ENCODE measurements at regions of chr5 and their contacts with region 1.

Region 1: DNA sequence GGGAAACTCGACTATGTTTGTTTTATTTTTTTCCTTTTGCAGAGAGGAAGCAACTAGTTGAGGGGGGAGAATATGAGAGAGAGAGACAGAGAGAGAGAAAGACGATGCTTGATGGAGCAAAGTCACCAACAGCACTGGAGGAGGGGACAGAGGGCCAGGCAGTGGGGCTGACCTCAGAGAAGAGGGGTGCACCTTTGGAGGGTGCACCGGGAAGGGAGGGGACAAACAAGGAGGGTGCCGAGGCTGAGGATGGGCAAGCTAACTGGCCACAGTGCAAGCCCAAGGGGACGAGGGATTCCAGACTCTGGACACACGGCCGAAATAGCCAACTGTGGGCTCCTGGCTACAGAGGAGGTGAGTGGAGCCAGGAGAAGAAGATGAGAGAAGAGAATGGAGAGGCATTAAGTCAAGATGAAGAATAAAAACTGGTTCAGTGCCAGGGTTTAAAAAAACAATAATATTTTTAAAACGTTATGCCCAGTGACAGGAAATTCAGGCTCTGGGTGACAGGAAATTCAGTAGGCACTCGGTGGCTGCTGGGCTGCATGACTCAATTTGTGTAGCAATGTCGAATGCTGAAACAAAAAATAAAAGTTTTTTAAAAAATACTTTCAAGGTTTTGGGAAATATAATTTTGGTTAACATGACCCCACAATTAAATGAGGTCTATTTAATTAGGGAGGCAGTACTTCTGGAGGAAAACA is 13.3 kb upstream of the GLRX start:
- DNase-seq: peak; percentile 28 to 70 (median 33)
- H3K4me3 ChIP-seq: peak overlapping the region; percentile 43 to 78
- H3K4me3 Mint-ChIP-seq: peak overlapping the region; percentile 82 to 98 (median 89)
- H3K27ac ChIP-seq: peak overlapping the region; percentile 77
- H3K27ac Mint-ChIP-seq: peak overlapping the region; percentile 87 to 97 (median 93)
- H3K4me1 ChIP-seq: peaks cover 39% of the 10 kb centered on the region
- H3K4me1 Mint-ChIP-seq: peaks cover 24 to 68% (median 49%) of the 10 kb centered on the region in 4 donors
- H3K27me3 ChIP-seq: no peaks in the 10 kb centered on the region
- H3K27me3 Mint-ChIP-seq: no peaks in the 10 kb centered on the region

Region 2: DNA sequence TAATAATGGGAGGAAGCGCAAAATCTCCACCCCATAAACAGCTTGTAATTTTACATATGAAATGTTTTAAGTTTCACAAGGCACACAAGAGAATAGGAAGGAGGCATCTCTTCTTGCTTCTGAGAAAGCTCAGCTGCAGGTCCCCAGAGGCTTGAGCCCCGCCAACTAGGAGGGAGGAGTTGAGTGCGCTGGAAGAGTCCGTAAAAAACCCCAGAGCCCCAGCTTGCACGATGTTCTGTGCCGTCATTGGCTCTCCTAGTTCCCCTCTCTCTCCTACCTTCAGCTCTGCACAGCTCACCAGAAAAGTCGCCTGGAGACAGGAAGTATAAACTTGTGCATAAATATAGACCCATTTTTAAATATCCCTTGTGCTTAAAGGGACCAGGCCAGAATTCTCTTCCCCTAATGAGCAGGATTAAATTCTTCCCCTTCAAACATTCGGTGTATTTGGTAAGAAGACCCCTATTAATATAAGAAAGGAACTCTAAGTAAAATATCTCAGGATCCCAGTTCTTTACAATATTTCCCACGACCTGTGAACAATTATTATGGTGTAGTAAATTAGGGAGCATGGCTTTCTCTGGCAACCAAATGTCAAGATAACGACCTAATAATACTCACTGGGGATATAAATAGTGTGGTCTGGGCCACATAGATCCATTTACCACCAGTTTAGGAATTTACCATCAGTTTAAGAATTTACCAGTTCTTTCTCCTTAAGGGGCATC is 27.0 kb before region 1 on chr5:
- CTCF ChIA-PET with region 1: interaction called, 40 read pairs
- POLR2A ChIA-PET with region 1: interaction called, 92 read pairs
- intact Hi-C with region 1: loop called (anchors 1 kb)
- DNase-seq: peak; percentile 77 to 94 (median 88)
- H3K4me3 ChIP-seq: no peak overlapping the region
- H3K4me3 Mint-ChIP-seq: peak overlapping the region; percentile 57 to 87 (median 72)
- H3K27ac ChIP-seq: peak overlapping the region; percentile 67
- H3K27ac Mint-ChIP-seq: peak overlapping the region; percentile 66 to 95 (median 91)
- H3K4me1 ChIP-seq: peaks cover 59% of the 10 kb centered on the region
- H3K4me1 Mint-ChIP-seq: peaks cover 46 to 66% (median 56%) of the 10 kb centered on the region in 4 donors
- H3K27me3 ChIP-seq: no peaks in the 10 kb centered on the region
- H3K27me3 Mint-ChIP-seq: no peaks in the 10 kb centered on the region

Region 3: DNA sequence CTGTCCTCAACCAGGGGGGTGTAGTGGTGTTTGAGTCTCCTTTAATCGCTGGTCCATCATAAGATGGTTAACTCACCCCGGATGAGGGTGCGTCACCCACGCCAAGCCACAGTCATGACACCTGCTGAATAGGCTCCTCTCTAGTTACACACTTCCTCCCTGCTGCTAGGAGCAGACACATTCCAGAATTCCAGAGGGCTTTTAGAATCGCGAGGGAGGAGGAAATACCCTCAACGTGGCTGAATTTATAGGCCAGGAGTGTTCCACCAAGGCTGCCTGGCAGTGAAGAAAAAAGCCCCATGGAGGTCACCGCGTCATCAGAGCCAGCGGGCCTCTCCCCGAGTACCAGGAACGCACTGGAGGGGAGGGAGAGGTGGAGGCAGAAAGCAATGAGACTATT is 18.4 kb before region 1 on chr5:
- CTCF ChIA-PET with region 1: interaction called, 68 read pairs
- POLR2A ChIA-PET with region 1: interaction called, 273 read pairs
- intact Hi-C with region 1: loop called (anchors 1 kb)
- DNase-seq: peak in 2 of 5 donors; percentile 35 to 77
- H3K4me3 ChIP-seq: peak overlapping the region; percentile 21 to 44
- H3K4me3 Mint-ChIP-seq: peak overlapping the region; percentile 79 to 100 (median 98)
- H3K27ac ChIP-seq: peak overlapping the region; percentile 66
- H3K27ac Mint-ChIP-seq: peak overlapping the region; percentile 76 to 96 (median 92)
- H3K4me1 ChIP-seq: peaks cover 82% of the 10 kb centered on the region
- H3K4me1 Mint-ChIP-seq: peaks cover 64 to 95% (median 68%) of the 10 kb centered on the region in 4 donors
- H3K27me3 ChIP-seq: no peaks in the 10 kb centered on the region
- H3K27me3 Mint-ChIP-seq: no peaks in the 10 kb centered on the region

Region 4: DNA sequence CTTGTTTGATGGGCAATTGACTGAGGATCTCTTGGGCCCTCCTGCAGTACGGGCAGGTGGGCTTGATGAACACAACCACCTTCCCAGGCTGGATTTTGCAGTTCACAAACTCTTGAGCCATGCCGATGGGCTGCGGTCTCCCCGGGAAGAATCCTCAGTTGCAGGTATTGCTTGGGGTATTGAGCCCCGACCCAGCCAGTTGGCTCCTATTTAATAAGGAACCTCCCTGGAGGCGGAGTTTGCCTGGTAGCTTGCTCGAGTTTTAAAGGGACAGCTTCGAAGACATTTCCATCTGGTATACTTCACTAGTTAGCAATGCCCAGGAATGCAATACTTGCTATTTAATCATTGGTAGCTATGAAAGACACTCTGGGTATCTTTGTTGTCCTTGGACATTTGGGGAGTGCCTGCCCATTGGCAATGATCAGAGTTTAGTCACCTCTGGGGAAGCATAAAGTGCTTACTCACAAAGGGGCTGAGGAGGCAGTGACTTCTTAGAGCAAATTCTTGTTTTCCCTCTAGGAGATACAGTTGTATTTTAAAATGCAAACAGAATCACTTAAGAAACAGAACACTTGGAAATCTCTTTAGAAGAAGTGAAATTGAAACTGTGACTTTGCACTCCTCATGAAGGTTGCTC is 13.2 kb before region 1 on chr5 and contains the start of gene GLRX:
- CTCF ChIA-PET with region 1: interaction called, 68 read pairs
- POLR2A ChIA-PET with region 1: interaction called, 273 read pairs
- intact Hi-C with region 1: loop called (anchors 1 kb)
- DNase-seq: peak; percentile 56 to 71 (median 64)
- H3K4me3 ChIP-seq: peak within 1 kb of the TSS; percentile 89 to 91
- H3K4me3 Mint-ChIP-seq: peak within 1 kb of the TSS; percentile 98 to 100 (median 99)
- H3K27ac ChIP-seq: peak within 1 kb of the TSS; percentile 79
- H3K27ac Mint-ChIP-seq: peak within 1 kb of the TSS; percentile 76 to 99 (median 97)
- H3K4me1 ChIP-seq: peaks cover 72% of the 10 kb centered on the region
- H3K4me1 Mint-ChIP-seq: peaks cover 55 to 87% (median 60%) of the 10 kb centered on the region in 4 donors
- H3K27me3 ChIP-seq: no peaks in the 10 kb centered on the region
- H3K27me3 Mint-ChIP-seq: no peaks in the 10 kb centered on the region
- total RNA-seq, gene GLRX: 73.9 to 75.9 TPM

Region 5: GRCh38 chr5:96434201-96434645 is 598.4 kb after region 1 on chr5:
- CTCF ChIA-PET with region 1: no interaction called
- POLR2A ChIA-PET with region 1: no interaction called
- intact Hi-C with region 1: no loop called
- DNase-seq: peak; percentile 21 to 44 (median 36)
- H3K4me3 ChIP-seq: no peak overlapping the region
- H3K4me3 Mint-ChIP-seq: peak overlapping the region in 1 of 8 donors; percentile 19
- H3K27ac ChIP-seq: no peak overlapping the region
- H3K27ac Mint-ChIP-seq: no peak overlapping the region
- H3K4me1 ChIP-seq: no peaks in the 10 kb centered on the region
- H3K4me1 Mint-ChIP-seq: peaks cover 6 to 22% (median 8%) of the 10 kb centered on the region in 4 donors
- H3K27me3 ChIP-seq: peaks cover 22% of the 10 kb centered on the region
- H3K27me3 Mint-ChIP-seq: peaks cover 54 to 60% of the 10 kb centered on the region in 2 donors